Heart left ventricle (tissue), 16 donors: ENCODE measurements at regions of chr7 and their contacts with region 1.

Region 1: GRCh38 chr7:93055543-93056107 is 62.2 kb downstream of the SAMD9 start:
- DNase-seq: no peak
- ATAC-seq: peak in 1 of 4 donors; percentile 69
- H3K4me3 ChIP-seq: no peak overlapping the region
- H3K27ac ChIP-seq: no peak overlapping the region
- H3K4me1 ChIP-seq: peaks cover 0 to 12% (median 0%) of the 10 kb centered on the region in 12 donors
- H3K27me3 ChIP-seq: no peaks in the 10 kb centered on the region
- CTCF ChIP-seq: peak; percentile 71 to 87 (median 80)
- POLR2A ChIP-seq: no peak

Region 2: DNA sequence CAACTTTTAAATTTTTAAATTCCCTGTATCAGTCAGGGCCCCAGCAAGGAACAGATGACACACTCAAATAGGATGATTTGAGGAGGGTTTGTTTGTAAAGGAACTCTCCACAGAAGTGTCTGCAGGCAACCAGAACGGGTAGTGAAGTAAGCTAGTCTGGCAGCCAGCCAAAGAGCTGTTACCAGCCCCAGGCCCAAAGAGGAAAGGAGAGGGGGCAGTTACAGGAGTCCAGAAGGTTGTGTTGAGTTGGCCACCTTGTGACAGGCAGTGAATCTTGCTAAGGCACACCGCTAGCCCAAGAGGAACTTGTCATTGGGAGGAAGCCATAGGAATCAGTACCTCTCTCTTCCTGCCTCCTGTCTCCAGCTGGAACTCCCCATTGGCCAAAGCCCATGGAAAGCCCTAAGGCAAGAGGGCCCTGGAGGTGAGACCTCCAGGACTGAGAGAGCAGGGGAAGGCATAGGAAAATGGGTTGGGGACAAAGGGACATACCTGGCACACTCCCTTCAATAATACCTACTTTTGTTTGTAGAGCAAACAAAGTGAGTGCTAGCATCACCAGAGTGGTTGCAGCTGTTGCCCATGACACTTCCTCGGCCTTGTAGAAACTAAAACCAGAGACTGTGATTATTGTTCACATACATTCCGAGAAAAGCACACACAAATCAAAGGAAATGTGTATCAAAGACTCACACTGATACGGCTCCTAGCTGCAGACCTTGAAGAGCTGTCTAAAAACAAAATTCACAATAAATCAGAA is 633.8 kb before region 1 on chr7:
- intact Hi-C with region 1: loop called in 2 of 10 experiments (anchors 10 kb)
- DNase-seq: no peak
- ATAC-seq: no peak
- H3K4me3 ChIP-seq: no peak overlapping the region
- H3K27ac ChIP-seq: no peak overlapping the region
- H3K4me1 ChIP-seq: peaks cover 0 to 10% (median 0%) of the 10 kb centered on the region in 12 donors
- H3K27me3 ChIP-seq: peaks cover 0 to 13% (median 9%) of the 10 kb centered on the region in 9 donors
- CTCF ChIP-seq: no peak
- POLR2A ChIP-seq: no peak

Region 3: DNA sequence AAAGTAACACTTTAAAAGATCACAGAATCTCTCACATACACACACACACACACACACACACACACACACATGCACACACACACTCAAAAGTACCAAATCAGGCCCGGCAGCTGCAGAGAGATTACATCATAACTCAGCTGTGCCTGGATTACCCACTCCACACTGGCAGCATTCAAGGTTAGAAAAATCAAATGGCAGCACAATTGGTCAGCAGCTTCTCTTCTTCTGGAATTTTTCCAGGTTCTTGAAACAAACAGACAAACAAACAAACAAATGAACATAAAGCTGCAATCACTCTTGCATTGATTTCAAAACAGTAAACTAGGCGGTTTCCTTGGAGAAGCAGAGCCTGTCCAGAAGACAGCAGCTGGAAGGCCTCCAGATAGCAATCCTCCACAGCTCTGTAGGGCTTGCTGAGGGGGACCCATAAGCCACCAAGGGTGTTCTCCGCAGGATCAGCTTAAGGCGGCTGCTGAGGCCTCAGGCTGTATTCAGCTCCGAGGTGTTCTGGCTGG is 440.9 kb before region 1 on chr7:
- intact Hi-C with region 1: loop called in 2 of 10 experiments (anchors 2 to 5 kb)
- DNase-seq: peak in 2 of 5 donors; percentile 32 to 47
- ATAC-seq: peak; percentile 49 to 74 (median 67)
- H3K4me3 ChIP-seq: no peak overlapping the region
- H3K27ac ChIP-seq: no peak overlapping the region
- H3K4me1 ChIP-seq: peaks cover 0 to 16% (median 0%) of the 10 kb centered on the region in 12 donors
- H3K27me3 ChIP-seq: no peaks in the 10 kb centered on the region
- CTCF ChIP-seq: no peak
- POLR2A ChIP-seq: no peak

Region 4: GRCh38 chr7:92682903-92683539 is 372.6 kb before region 1 on chr7:
- intact Hi-C with region 1: loop called in 2 of 10 experiments (anchors 5 to 10 kb)
- DNase-seq: no peak
- ATAC-seq: no peak
- H3K4me3 ChIP-seq: no peak overlapping the region
- H3K27ac ChIP-seq: peak overlapping the region in 2 of 12 donors; percentile 2 to 56
- H3K4me1 ChIP-seq: peaks cover 0 to 51% (median 18%) of the 10 kb centered on the region in 12 donors
- H3K27me3 ChIP-seq: no peaks in the 10 kb centered on the region
- CTCF ChIP-seq: no peak
- POLR2A ChIP-seq: no peak

Region 5: DNA sequence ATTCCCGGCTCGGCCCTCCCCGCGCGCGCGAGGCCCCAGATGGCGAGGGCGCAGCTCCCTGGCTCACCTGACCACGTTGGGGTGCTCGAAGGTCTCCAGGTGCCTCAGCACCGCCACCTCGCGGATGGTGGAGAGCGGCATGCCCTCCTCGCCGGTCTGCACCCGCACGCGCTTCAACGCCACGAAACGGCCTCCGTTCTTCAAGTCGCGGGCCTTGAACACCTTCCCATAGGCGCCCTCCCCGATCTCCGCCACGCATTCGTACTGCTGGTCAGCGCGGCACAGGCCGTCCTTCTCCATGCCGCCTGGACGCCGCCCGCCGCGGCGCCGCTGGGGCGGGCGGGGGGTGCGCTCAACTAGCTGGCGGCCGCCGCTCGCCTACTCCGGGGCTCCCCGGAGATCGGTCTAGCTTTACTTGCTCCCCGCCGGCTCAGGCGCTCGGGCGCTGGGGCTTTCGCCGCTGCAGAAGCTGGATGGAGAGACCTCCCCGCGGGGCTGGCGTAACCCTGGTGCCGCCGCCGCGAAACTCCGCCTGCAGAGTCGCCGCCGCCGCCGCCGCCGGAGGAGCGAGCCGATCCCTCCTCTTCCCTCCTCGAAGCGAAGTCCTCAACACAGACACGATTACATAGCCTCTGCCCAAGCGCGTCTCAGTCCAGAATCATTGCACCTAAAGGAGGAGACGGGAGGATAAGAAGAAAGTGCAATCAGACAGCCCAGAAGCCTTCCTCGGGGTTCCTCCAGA is 222.4 kb before region 1 on chr7:
- intact Hi-C with region 1: loop called in 5 of 10 experiments (anchors 2 to 10 kb)
- DNase-seq: peak; percentile 85 to 93 (median 89)
- ATAC-seq: peak; percentile 59 to 85 (median 79)
- H3K4me3 ChIP-seq: peak overlapping the region; percentile 65 to 91 (median 85)
- H3K27ac ChIP-seq: peak overlapping the region; percentile 87 to 97 (median 92)
- H3K4me1 ChIP-seq: peaks cover 1 to 54% (median 20%) of the 10 kb centered on the region in 12 donors
- H3K27me3 ChIP-seq: no peaks in the 10 kb centered on the region
- CTCF ChIP-seq: peak; percentile 72 to 93 (median 83)
- POLR2A ChIP-seq: peak in 1 of 2 donors; percentile 25

Region 6: GRCh38 chr7:92875719-92876118 is 179.9 kb before region 1 on chr7:
- intact Hi-C with region 1: loop called in 1 of 10 experiments (anchors 10 kb)
- DNase-seq: no peak
- ATAC-seq: no peak
- H3K4me3 ChIP-seq: no peak overlapping the region
- H3K27ac ChIP-seq: no peak overlapping the region
- H3K4me1 ChIP-seq: peaks cover 0 to 2% (median 0%) of the 10 kb centered on the region in 12 donors
- H3K27me3 ChIP-seq: no peaks in the 10 kb centered on the region
- CTCF ChIP-seq: no peak
- POLR2A ChIP-seq: no peak

Region 7: GRCh38 chr7:93043385-93043985 is 12.1 kb before region 1 on chr7:
- intact Hi-C with region 1: no loop called
- DNase-seq: peak in 3 of 5 donors; percentile 34 to 63 (median 41)
- ATAC-seq: peak in 3 of 4 donors; percentile 33 to 53 (median 45)
- H3K4me3 ChIP-seq: peak overlapping the region in 10 of 12 donors; percentile 8 to 44 (median 28)
- H3K27ac ChIP-seq: no peak overlapping the region
- H3K4me1 ChIP-seq: peaks cover 0 to 4% (median 0%) of the 10 kb centered on the region in 12 donors
- H3K27me3 ChIP-seq: no peaks in the 10 kb centered on the region
- CTCF ChIP-seq: no peak
- POLR2A ChIP-seq: no peak